Endothelial cell of umbilical vein (primary cell): ENCODE measurements at regions of chr1 and their contacts with region 1.

Region 1: GRCh38 chr1:197156691-197157090 is 10.2 kb upstream of the ASPM start:
- DNase-seq: no peak
- H3K4me3 ChIP-seq: no peak overlapping the region
- H3K27ac ChIP-seq: no peak overlapping the region
- H3K4me1 ChIP-seq: no peaks in the 10 kb centered on the region
- H3K27me3 ChIP-seq: no peaks in the 10 kb centered on the region
- CTCF ChIP-seq: no peak
- POLR2A ChIP-seq: no peak

Region 2: GRCh38 chr1:196738730-196739129 is 418.0 kb before region 1 on chr1:
- CTCF ChIA-PET with region 1: interaction called, 3 read pairs
- POLR2A ChIA-PET with region 1: no interaction called
- dilution Hi-C with region 1: no loop called
- intact Hi-C with region 1: loop called (anchors 10 kb)
- DNase-seq: no peak
- H3K4me3 ChIP-seq: no peak overlapping the region
- H3K27ac ChIP-seq: no peak overlapping the region
- H3K4me1 ChIP-seq: no peaks in the 10 kb centered on the region
- H3K27me3 ChIP-seq: no peaks in the 10 kb centered on the region
- CTCF ChIP-seq: no peak
- POLR2A ChIP-seq: no peak

Region 3: GRCh38 chr1:197234581-197234980 is 77.9 kb after region 1 on chr1:
- CTCF ChIA-PET with region 1: no interaction called
- POLR2A ChIA-PET with region 1: no interaction called
- dilution Hi-C with region 1: no loop called
- intact Hi-C with region 1: no loop called
- DNase-seq: no peak
- H3K4me3 ChIP-seq: no peak overlapping the region
- H3K27ac ChIP-seq: no peak overlapping the region
- H3K4me1 ChIP-seq: no peaks in the 10 kb centered on the region
- H3K27me3 ChIP-seq: peaks cover 1 to 2% of the 10 kb centered on the region in 2 experiments
- CTCF ChIP-seq: no peak
- POLR2A ChIP-seq: no peak